ENCODE measurements at regions of chr17 and their contacts with region 1.

Region 1: GRCh38 chr17:28720247-28720996 is 637 bp downstream of the RPL23A start:
- DNase-seq: peak; percentile 62
- H3K4me3 ChIP-seq: peak overlapping the region; percentile 88
- H3K27ac ChIP-seq: peak overlapping the region; percentile 82
- H3K4me1 ChIP-seq: peaks cover 50% of the 10 kb centered on the region
- CTCF ChIP-seq: peak; percentile 62

Region 2: DNA sequence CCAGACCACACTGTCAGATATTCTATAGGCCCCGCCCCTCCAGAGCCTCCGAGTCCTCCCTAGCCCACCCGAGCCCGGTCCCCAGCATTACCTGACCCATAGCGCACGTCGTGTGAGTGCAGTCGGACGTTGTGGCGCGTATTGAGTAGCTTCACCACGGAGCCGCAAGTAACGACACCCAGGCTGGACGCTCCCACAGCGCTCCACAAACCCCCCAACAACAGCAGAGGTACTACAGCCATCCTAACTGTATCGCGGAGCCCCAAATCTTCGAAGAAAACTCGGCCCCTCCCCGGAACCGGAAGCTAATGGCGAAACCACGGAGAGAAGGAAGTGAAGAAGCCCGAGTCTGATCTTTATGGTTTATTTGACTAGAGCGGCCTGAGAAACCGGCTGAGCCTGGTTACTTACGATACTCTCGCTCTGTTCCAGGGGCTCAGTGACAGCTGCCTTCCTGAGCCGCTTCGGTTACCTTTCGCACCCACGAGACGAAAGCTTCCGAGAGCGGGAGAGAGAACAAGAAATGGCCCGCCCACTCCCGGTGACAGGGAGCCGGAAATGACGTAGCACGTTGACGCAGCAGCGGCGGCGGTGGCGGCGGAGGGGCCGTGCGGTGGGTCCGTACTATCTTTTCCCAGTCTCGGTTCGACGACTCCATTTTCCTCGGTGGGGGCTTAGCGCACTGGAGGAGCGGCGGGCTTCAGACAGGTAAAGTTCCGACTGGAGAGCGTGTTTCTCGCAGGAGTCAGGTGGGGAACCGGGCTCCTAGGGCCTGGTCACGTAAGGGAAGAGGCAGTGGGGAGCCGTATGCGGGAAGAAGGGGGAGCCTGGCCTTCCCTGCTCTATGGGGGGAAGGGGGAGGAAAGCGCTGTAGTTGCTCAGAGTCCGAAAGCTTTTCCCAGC is 58.5 kb before region 1 on chr17 and contains the starts of genes SDF2 and SUPT6H:
- CTCF ChIA-PET with region 1: interaction called, 3 read pairs
- POLR2A ChIA-PET with region 1: interaction called, 17 read pairs
- intact Hi-C with region 1: no loop called
- DNase-seq: peak; percentile 90
- H3K4me3 ChIP-seq: peak within 1 kb of the TSS; percentile 95
- H3K27ac ChIP-seq: peak within 1 kb of the TSS; percentile 88
- H3K4me1 ChIP-seq: peaks cover 22% of the 10 kb centered on the region
- CTCF ChIP-seq: no peak
- total RNA-seq, gene SDF2: 31.2 and 31.8 TPM in 2 replicates
- total RNA-seq, gene SUPT6H: 32.1 and 33.7 TPM in 2 replicates

Measured in OCI-LY7 (cell line).